A549 (cell line): ENCODE measurements at regions of chr7 and their contacts with region 1.

Region 1: GRCh38 chr7:74026903-74027551 is 946 bp upstream of the ELN start:
- DNase-seq: peak; percentile 54 to 75
- ATAC-seq: peak; percentile 60 to 88
- H3K4me3 ChIP-seq: no peak overlapping the region
- H3K27ac ChIP-seq: peak overlapping the region; percentile 36 to 46; a peak in 2 of 6 replicates
- H3K4me1 ChIP-seq: peaks cover 40% of the 10 kb centered on the region
- CTCF ChIP-seq: peak; percentile 78
- EP300 ChIP-seq: no peak
- POLR2A ChIP-seq: no peak
- RAD21 ChIP-seq: peak; percentile 77 to 81

Region 2: DNA sequence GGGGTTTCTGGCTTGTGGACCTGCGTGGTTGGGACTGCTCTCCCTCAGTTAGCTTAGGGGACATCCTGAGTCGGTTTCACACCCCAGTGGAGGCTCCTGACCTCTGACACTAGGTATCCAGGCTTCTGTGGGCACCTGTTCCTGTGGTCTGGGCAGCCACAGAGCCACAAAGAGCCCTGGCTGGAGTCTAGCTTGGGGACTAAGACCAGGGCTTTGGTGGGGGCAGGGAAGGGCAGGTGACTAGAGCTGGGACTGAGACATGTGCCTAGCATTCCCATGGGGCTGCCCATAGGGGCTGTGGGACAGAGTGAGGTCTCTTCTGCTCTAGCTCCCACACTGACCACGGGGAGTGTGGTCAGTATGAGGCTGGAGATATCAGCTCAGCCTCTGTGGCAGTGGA is 170.1 kb before region 1 on chr7:
- CTCF ChIA-PET with region 1: interaction called, 94 read pairs
- POLR2A ChIA-PET with region 1: interaction called, 3 read pairs
- DNase-seq: no peak
- ATAC-seq: no peak
- H3K4me3 ChIP-seq: no peak overlapping the region
- H3K27ac ChIP-seq: no peak overlapping the region; a peak in 1 of 6 replicates
- H3K4me1 ChIP-seq: peaks cover 8% of the 10 kb centered on the region
- CTCF ChIP-seq: no peak
- EP300 ChIP-seq: no peak
- POLR2A ChIP-seq: no peak
- RAD21 ChIP-seq: no peak

Region 3: GRCh38 chr7:73879977-73880681 is 146.9 kb before region 1 on chr7:
- CTCF ChIA-PET with region 1: interaction called, 25 read pairs
- POLR2A ChIA-PET with region 1: no interaction called
- DNase-seq: peak in 1 of 2 experiments; percentile 31
- ATAC-seq: peak; percentile 17 to 55; a peak in 4 of 6 replicates
- H3K4me3 ChIP-seq: no peak overlapping the region
- H3K27ac ChIP-seq: no peak overlapping the region
- H3K4me1 ChIP-seq: peaks cover 17% of the 10 kb centered on the region
- CTCF ChIP-seq: no peak
- EP300 ChIP-seq: no peak
- POLR2A ChIP-seq: no peak
- RAD21 ChIP-seq: no peak

Region 4: GRCh38 chr7:73894733-73895551 is 132.1 kb before region 1 on chr7:
- CTCF ChIA-PET with region 1: interaction called, 22 read pairs
- POLR2A ChIA-PET with region 1: no interaction called
- DNase-seq: peak; percentile 67 to 76
- ATAC-seq: peak; percentile 84 to 90
- H3K4me3 ChIP-seq: no peak overlapping the region
- H3K27ac ChIP-seq: peak overlapping the region; percentile 35 to 75; a peak in 5 of 6 replicates
- H3K4me1 ChIP-seq: peaks cover 35% of the 10 kb centered on the region
- CTCF ChIP-seq: no peak
- EP300 ChIP-seq: peak; percentile 12 to 69; a peak in 1 of 5 replicates
- POLR2A ChIP-seq: no peak
- RAD21 ChIP-seq: no peak

Region 5: GRCh38 chr7:73978661-73979563 is 48.1 kb before region 1 on chr7:
- CTCF ChIA-PET with region 1: interaction called, 23 read pairs
- POLR2A ChIA-PET with region 1: no interaction called
- DNase-seq: peak; percentile 90
- ATAC-seq: peak; percentile 77 to 93
- H3K4me3 ChIP-seq: no peak overlapping the region
- H3K27ac ChIP-seq: peak overlapping the region; percentile 74 to 82
- H3K4me1 ChIP-seq: peaks cover 22% of the 10 kb centered on the region
- CTCF ChIP-seq: peak; percentile 69
- EP300 ChIP-seq: no peak
- POLR2A ChIP-seq: no peak
- RAD21 ChIP-seq: peak; percentile 73 to 87

Region 6: DNA sequence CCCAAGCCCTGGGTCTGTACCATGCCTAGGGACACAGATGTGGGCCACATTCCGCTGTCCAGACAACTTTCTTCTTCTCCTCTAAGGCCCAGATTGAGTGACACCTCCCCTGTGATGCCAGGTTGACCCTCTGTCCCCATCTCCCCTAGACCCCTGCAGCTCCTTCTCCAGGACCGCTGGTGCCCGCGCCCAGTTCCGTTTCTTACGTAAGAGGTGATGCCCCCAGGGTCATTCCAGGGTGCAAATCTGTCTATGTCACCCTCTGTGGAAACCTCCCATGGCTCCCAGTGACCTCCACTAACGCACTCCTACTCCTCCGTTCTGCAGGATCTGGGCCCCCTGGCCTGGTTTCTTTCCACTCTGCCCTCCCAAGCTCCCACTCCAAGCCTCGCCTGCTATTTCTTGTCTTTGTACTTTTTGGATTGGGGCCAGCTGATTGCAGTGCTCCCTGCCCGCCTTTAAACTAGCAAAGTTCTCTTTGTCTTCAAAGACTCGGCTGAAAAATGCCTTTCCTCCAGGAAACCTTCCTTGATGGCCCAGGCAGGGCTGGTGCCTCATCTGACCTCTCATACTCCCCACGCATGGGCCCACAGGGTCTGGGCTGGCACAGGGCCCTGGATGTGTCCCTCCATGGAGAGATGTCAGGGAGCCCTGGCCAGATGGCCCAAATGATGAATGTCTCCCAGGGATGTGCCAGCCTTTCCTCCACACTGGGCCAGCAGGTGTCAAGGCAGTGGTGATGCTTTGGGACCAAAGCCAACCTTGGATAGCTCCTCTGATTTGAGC is 20.4 kb before region 1 on chr7:
- CTCF ChIA-PET with region 1: interaction called, 57 read pairs
- POLR2A ChIA-PET with region 1: no interaction called
- DNase-seq: no peak
- ATAC-seq: no peak
- H3K4me3 ChIP-seq: no peak overlapping the region
- H3K27ac ChIP-seq: no peak overlapping the region
- H3K4me1 ChIP-seq: peaks cover 20% of the 10 kb centered on the region
- CTCF ChIP-seq: no peak
- EP300 ChIP-seq: no peak
- POLR2A ChIP-seq: no peak
- RAD21 ChIP-seq: no peak

Region 7: DNA sequence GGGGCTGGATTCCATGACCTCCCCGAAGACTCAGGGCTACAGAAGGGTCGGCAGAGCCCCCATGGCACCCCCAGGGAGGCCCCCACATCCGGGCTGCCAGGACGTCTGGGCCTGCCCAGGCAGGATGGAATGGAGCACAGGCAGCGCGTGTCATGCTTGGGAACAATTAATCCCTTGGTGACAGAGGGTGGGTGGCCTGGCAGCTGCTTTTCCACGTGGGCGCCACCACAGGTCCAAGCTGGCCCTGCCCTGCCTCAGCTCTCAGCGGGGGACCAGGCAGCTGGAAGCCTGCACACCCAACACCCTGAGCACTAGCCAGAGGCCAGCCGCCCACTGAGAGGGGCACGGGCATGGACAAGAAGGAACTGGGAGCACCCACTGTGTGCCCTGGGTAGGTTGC is 12.3 kb after region 1 on chr7:
- CTCF ChIA-PET with region 1: interaction called, 93 read pairs
- POLR2A ChIA-PET with region 1: no interaction called
- DNase-seq: no peak
- ATAC-seq: no peak
- H3K4me3 ChIP-seq: no peak overlapping the region
- H3K27ac ChIP-seq: no peak overlapping the region
- H3K4me1 ChIP-seq: no peaks in the 10 kb centered on the region
- CTCF ChIP-seq: no peak
- EP300 ChIP-seq: no peak
- POLR2A ChIP-seq: no peak
- RAD21 ChIP-seq: no peak